HAP-1 (cell line): ENCODE measurements at regions of chr9 and their contacts with region 1.

Region 1: DNA sequence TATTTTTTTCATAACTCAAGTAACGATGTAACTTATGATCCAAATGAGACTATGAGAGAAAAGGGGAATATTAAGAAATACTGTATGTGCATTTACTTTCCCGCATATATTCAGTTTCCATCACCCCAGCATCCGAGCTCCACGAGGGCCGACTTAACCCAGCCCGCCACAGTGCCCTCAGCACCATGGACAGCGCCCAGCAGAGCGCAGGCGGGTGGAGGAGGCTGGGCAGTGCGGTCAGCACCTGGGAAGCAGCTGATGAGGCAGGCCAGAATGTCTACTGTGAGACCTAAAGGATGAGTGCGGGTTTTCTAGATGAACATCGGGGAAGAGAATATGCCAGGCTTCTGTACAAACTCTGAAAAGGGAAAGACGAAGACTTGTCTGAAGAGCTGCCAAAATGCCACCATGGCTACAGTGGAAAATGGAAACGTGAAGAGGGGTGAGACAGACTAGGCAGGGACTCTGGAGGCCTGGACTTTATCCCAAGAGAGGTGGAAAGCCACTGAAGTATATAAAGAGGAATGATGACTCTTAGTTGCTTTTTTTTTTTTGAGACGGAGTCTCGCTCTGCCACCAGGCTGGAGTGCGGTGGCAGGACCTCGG is 34.5 kb upstream of the MED27 start:
- DNase-seq: peak; percentile 39 to 83
- H3K4me3 ChIP-seq: no peak overlapping the region
- H3K4me1 ChIP-seq: no peaks in the 10 kb centered on the region
- H3K27me3 ChIP-seq: no peaks in the 10 kb centered on the region

Region 2: GRCh38 chr9:131799177-131799823 is 314.9 kb before region 1 on chr9:
- in situ Hi-C with region 1: loop called (anchors 25 kb)
- DNase-seq: peak; percentile 31 to 83
- H3K4me3 ChIP-seq: no peak overlapping the region
- H3K4me1 ChIP-seq: no peaks in the 10 kb centered on the region
- H3K27me3 ChIP-seq: peaks cover 7% of the 10 kb centered on the region